Activated CD4-positive, alpha-beta T cell treated with anti-CD3 and anti-CD28 coated beads for 36 hours (primary cell): ENCODE measurements at regions of chr6 and their contacts with region 1.

Region 1: GRCh38 chr6:73515204-73515655 is 5.6 kb downstream of the EEF1A1 start:
- DNase-seq: peak; percentile 28
- ATAC-seq: peak; percentile 7
- H3K4me3 Mint-ChIP-seq: peak overlapping the region; percentile 97
- H3K27ac Mint-ChIP-seq: peak overlapping the region; percentile 98
- H3K4me1 Mint-ChIP-seq: peaks cover 37% of the 10 kb centered on the region
- H3K27me3 Mint-ChIP-seq: no peaks in the 10 kb centered on the region

Region 2: GRCh38 chr6:73461537-73462350 is 53.5 kb before region 1 on chr6 and contains the start of gene MTO1:
- CTCF ChIA-PET with region 1: interaction called, 3 read pairs
- POLR2A ChIA-PET with region 1: interaction called, 39 read pairs
- intact Hi-C with region 1: loop called in 1 of 2 experiments (anchors 2 kb)
- DNase-seq: peak; percentile 92
- ATAC-seq: peak; percentile 96
- H3K4me3 Mint-ChIP-seq: peak within 1 kb of the TSS; percentile 93
- H3K27ac Mint-ChIP-seq: peak within 1 kb of the TSS; percentile 100
- H3K4me1 Mint-ChIP-seq: peaks cover 37% of the 10 kb centered on the region
- H3K27me3 Mint-ChIP-seq: no peaks in the 10 kb centered on the region
- total RNA-seq, gene MTO1: 45.0 to 49.7 TPM

Region 3: GRCh38 chr6:73580247-73581149 is 65.3 kb after region 1 on chr6:
- CTCF ChIA-PET with region 1: interaction called, 3 read pairs
- POLR2A ChIA-PET with region 1: interaction called, 28 read pairs
- intact Hi-C with region 1: no loop called
- DNase-seq: peak; percentile 89
- ATAC-seq: peak; percentile 92
- H3K4me3 Mint-ChIP-seq: peak overlapping the region; percentile 60
- H3K27ac Mint-ChIP-seq: peak overlapping the region; percentile 99
- H3K4me1 Mint-ChIP-seq: peaks cover 29% of the 10 kb centered on the region
- H3K27me3 Mint-ChIP-seq: no peaks in the 10 kb centered on the region

Region 4: DNA sequence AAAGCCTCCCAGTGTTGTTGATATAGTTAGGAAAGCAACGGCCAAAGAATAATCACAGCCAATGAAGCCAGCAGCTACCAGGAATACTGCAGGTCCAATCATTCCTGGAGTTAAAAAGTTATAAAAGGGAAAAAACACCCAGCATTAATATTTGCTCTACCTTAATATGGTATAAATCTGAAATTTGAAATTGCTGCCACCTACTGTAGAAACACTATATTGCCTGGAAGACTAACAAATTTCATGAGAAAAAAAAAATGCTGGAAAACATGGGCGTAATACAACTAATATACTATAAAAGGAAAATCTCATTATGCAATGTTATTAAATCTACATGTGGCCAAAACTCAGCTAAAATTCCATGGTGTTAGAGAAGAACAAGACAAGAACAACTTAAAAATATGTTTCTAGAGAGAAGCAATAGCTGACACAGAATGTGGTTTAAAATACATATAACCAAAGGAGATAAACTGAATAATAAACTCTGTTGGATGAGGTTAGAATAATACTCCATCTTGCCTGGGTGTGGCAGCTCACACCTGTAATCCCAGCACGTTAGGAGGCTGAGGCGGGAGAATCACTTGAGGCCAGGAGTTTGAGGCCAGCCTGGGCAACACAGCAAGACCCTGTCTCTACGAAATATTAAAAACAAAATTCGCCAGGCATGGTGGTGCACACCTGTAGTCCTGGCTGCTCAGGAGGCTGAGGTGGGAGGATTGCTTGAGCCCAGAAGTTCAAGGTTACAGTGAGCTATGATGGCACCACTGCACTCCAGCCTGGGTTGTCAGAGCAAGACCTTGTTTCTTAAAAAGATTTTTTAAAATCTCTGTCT is 95.4 kb after region 1 on chr6:
- CTCF ChIA-PET with region 1: interaction called, 20 read pairs
- POLR2A ChIA-PET with region 1: interaction called, 16 read pairs
- intact Hi-C with region 1: loop called (anchors 1 kb)
- DNase-seq: no peak
- ATAC-seq: peak; percentile 51
- H3K4me3 Mint-ChIP-seq: no peak overlapping the region
- H3K27ac Mint-ChIP-seq: no peak overlapping the region
- H3K4me1 Mint-ChIP-seq: peaks cover 7% of the 10 kb centered on the region
- H3K27me3 Mint-ChIP-seq: no peaks in the 10 kb centered on the region